Activated CD4-positive, alpha-beta T cell treated with anti-CD3 and anti-CD28 coated beads for 36 hours (primary cell): ENCODE measurements at regions of chr14 and their contacts with region 1.

Region 1: DNA sequence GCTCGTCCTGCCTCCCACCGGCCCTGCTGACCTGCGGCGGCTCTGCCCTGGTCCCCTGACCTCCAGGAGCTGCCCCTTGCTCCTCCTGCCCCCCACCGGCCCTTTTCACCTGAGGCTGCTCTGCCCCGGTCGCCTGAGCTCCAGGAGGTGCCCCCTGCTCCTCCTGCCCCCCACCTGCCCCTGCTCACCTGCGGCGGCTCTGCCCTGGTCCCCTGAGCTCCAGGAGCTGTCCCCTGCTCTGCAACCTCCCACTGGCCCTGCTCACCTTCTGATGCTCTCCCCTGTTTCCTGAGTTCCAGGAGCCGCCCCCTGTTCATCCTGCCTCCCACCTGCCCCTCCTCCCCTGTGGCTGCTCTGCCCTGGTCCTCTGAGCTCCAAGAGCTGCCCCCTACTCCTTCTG is 101.3 kb downstream of the TMEM121 start:
- DNase-seq: no peak
- ATAC-seq: no peak
- H3K4me3 Mint-ChIP-seq: no peak overlapping the region
- H3K27ac Mint-ChIP-seq: no peak overlapping the region
- H3K4me1 Mint-ChIP-seq: no peaks in the 10 kb centered on the region
- H3K27me3 Mint-ChIP-seq: peaks cover 5% of the 10 kb centered on the region

Region 2: DNA sequence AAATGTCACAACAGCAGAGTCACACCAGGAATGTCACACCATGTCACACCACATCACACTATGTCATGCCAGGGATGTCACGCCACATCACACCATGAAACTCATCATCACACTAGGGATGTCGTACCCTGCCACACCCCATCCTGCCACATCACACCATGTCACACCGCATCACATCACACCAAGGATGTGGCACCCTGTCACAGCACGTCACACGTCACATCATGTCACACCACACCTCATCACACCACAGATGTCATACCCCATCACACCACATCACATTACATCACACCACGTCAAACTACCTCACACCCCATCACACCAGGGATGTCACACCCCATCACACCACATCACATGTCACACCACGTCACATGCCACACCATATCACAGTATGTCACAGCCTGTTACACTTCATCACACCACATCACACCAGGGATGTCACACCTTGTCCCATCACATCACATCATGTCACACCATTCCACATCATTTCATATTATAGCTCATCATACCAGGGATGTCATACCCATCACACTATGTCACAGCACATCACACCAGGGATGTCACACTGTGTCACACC is 10.4 kb before region 1 on chr14:
- CTCF ChIA-PET with region 1: no interaction called
- POLR2A ChIA-PET with region 1: no interaction called
- intact Hi-C with region 1: loop called in 1 of 2 experiments (anchors 1 kb)
- DNase-seq: peak; percentile 35
- ATAC-seq: peak; percentile 16
- H3K4me3 Mint-ChIP-seq: no peak overlapping the region
- H3K27ac Mint-ChIP-seq: no peak overlapping the region
- H3K4me1 Mint-ChIP-seq: no peaks in the 10 kb centered on the region
- H3K27me3 Mint-ChIP-seq: peaks cover 8% of the 10 kb centered on the region

Region 3: DNA sequence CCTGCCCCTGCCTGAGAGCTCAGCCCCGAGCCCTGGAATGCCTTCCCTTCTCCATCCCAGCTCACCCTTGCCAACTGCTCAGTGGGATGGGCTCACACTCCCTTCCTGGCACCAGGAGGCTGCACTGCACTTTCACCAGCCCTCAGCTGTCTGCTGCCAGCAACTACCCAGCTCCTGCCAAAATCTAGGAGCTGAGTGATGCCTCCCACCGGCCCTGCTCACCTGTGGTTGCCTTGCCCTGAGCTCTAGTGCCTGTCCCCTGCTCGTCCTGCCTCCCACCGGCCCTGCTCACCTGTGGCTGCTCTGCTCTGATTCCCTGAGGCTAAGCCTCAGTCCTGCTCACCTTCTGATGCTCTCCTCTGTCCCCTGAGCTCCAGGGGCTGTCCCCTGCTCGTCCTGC is 18.5 kb after region 1 on chr14:
- CTCF ChIA-PET with region 1: no interaction called
- POLR2A ChIA-PET with region 1: no interaction called
- intact Hi-C with region 1: loop called in 1 of 2 experiments (anchors 1 kb)
- DNase-seq: no peak
- ATAC-seq: no peak
- H3K4me3 Mint-ChIP-seq: no peak overlapping the region
- H3K27ac Mint-ChIP-seq: no peak overlapping the region
- H3K4me1 Mint-ChIP-seq: no peaks in the 10 kb centered on the region
- H3K27me3 Mint-ChIP-seq: no peaks in the 10 kb centered on the region

Region 4: GRCh38 chr14:105664676-105665075 is 37.0 kb after region 1 on chr14:
- CTCF ChIA-PET with region 1: no interaction called
- POLR2A ChIA-PET with region 1: no interaction called
- intact Hi-C with region 1: no loop called
- DNase-seq: no peak
- ATAC-seq: no peak
- H3K4me3 Mint-ChIP-seq: no peak overlapping the region
- H3K27ac Mint-ChIP-seq: no peak overlapping the region
- H3K4me1 Mint-ChIP-seq: no peaks in the 10 kb centered on the region
- H3K27me3 Mint-ChIP-seq: peaks cover 14% of the 10 kb centered on the region

Region 5: GRCh38 chr14:105917933-105918436 is 290.3 kb after region 1 on chr14:
- CTCF ChIA-PET with region 1: no interaction called
- POLR2A ChIA-PET with region 1: no interaction called
- intact Hi-C with region 1: no loop called
- DNase-seq: no peak
- ATAC-seq: no peak
- H3K4me3 Mint-ChIP-seq: no peak overlapping the region
- H3K27ac Mint-ChIP-seq: no peak overlapping the region
- H3K4me1 Mint-ChIP-seq: no peaks in the 10 kb centered on the region
- H3K27me3 Mint-ChIP-seq: peaks cover 5% of the 10 kb centered on the region